ENCODE measurements at regions of chr11 and their contacts with region 1.

Region 1: GRCh38 chr11:2532704-2533586 is 88.1 kb downstream of the KCNQ1 start:
- DNase-seq: peak; percentile 93
- ATAC-seq: peak; percentile 89
- H3K4me3 ChIP-seq: peak overlapping the region in 2 of 5 experiments; percentile 9 to 19
- H3K4me3 Mint-ChIP-seq: peak overlapping the region; percentile 85
- H3K27ac ChIP-seq: no peak overlapping the region
- H3K27ac Mint-ChIP-seq: no peak overlapping the region
- H3K4me1 ChIP-seq: peaks cover 19 to 23% of the 10 kb centered on the region in 2 donors
- H3K4me1 Mint-ChIP-seq: peaks cover 22% of the 10 kb centered on the region
- H3K27me3 ChIP-seq: peaks cover 0 to 14% (median 0%) of the 10 kb centered on the region in 4 experiments
- H3K27me3 Mint-ChIP-seq: no peaks in the 10 kb centered on the region
- CTCF ChIP-seq: peak; percentile 99

Region 2: GRCh38 chr11:2298795-2299761 is 233.9 kb before region 1 on chr11:
- CTCF ChIA-PET with region 1: interaction called, 17 read pairs
- POLR2A ChIA-PET with region 1: no interaction called
- intact Hi-C with region 1: loop called (anchors 5 kb)
- DNase-seq: peak; percentile 52
- ATAC-seq: no peak
- H3K4me3 ChIP-seq: peak overlapping the region in 2 of 5 experiments; percentile 21 to 44
- H3K4me3 Mint-ChIP-seq: peak overlapping the region; percentile 50
- H3K27ac ChIP-seq: peak overlapping the region in 1 of 2 donors; percentile 37
- H3K27ac Mint-ChIP-seq: peak overlapping the region; percentile 88
- H3K4me1 ChIP-seq: peaks cover 51 to 57% of the 10 kb centered on the region in 2 donors
- H3K4me1 Mint-ChIP-seq: peaks cover 58% of the 10 kb centered on the region
- H3K27me3 ChIP-seq: no peaks in the 10 kb centered on the region
- H3K27me3 Mint-ChIP-seq: no peaks in the 10 kb centered on the region
- CTCF ChIP-seq: no peak

Region 3: GRCh38 chr11:2428322-2428795 is 104.6 kb before region 1 on chr11:
- CTCF ChIA-PET with region 1: interaction called, 217 read pairs
- POLR2A ChIA-PET with region 1: interaction called, 4 read pairs
- intact Hi-C with region 1: no loop called
- DNase-seq: peak; percentile 85
- ATAC-seq: peak; percentile 94
- H3K4me3 ChIP-seq: no peak overlapping the region
- H3K4me3 Mint-ChIP-seq: no peak overlapping the region
- H3K27ac ChIP-seq: no peak overlapping the region
- H3K27ac Mint-ChIP-seq: no peak overlapping the region
- H3K4me1 ChIP-seq: no peaks in the 10 kb centered on the region
- H3K4me1 Mint-ChIP-seq: no peaks in the 10 kb centered on the region
- H3K27me3 ChIP-seq: no peaks in the 10 kb centered on the region
- H3K27me3 Mint-ChIP-seq: no peaks in the 10 kb centered on the region
- CTCF ChIP-seq: peak; percentile 82

Region 4: GRCh38 chr11:2885676-2886081 is 352.7 kb after region 1 on chr11 and contains the start of gene CDKN1C:
- CTCF ChIA-PET with region 1: interaction called, 595 read pairs
- POLR2A ChIA-PET with region 1: interaction called, 16 read pairs
- intact Hi-C with region 1: no loop called
- DNase-seq: peak; percentile 90
- ATAC-seq: peak; percentile 91
- H3K4me3 ChIP-seq: peak within 1 kb of the TSS; percentile 39 to 93 (median 70)
- H3K4me3 Mint-ChIP-seq: peak within 1 kb of the TSS; percentile 95
- H3K27ac ChIP-seq: no peak within 1 kb of the TSS
- H3K27ac Mint-ChIP-seq: peak within 1 kb of the TSS; percentile 56
- H3K4me1 ChIP-seq: peaks cover 9 to 20% of the 10 kb centered on the region in 2 donors
- H3K4me1 Mint-ChIP-seq: peaks cover 16% of the 10 kb centered on the region
- H3K27me3 ChIP-seq: peaks cover 0 to 34% (median 7%) of the 10 kb centered on the region in 4 experiments
- H3K27me3 Mint-ChIP-seq: peaks cover 15% of the 10 kb centered on the region
- CTCF ChIP-seq: no peak
- total RNA-seq, gene CDKN1C: 5.9 and 8.0 TPM in 2 replicates

Region 5: DNA sequence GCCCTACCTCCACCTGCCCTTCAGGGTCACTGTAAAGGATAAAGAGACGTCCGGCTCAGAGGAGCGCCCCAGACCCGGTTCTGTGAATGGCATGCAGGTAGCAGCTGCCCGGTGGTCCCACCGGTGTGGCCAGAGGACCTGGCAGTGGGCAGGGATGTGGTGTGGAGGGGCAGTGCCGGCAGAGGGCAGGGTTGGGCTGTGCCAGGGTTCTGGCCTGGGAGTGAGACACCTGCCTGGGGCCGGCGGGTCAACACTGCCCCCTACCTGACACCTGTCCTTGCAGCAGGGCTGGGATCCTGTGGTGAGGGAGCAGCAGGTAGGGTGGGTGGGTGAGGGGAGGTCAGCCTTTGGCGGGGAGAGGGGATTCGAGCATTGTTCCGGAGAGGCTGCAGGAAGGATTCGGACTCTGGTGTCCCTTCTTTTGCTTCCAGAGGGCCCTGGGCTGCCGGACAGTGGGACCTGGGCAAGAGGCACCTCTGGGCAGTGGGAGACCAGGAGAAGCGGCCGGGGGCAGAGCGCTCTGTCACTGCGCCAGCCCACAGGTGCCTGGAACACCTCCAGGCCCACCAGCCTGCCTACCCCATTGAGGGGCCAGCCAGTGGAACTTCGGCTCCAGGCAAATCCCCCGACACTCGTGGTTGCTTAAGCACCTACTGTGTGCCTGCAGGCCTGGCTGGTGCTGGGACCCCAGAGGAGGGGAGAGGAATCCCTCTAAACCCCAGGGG is 397.9 kb after region 1 on chr11:
- CTCF ChIA-PET with region 1: interaction called, 28 read pairs
- POLR2A ChIA-PET with region 1: no interaction called
- intact Hi-C with region 1: loop called (anchors 1 kb)
- DNase-seq: peak; percentile 58
- ATAC-seq: peak; percentile 53
- H3K4me3 ChIP-seq: peak overlapping the region in 4 of 5 experiments; percentile 35 to 65 (median 52)
- H3K4me3 Mint-ChIP-seq: peak overlapping the region; percentile 88
- H3K27ac ChIP-seq: no peak overlapping the region
- H3K27ac Mint-ChIP-seq: no peak overlapping the region
- H3K4me1 ChIP-seq: peaks cover 28% of the 10 kb centered on the region in 2 donors
- H3K4me1 Mint-ChIP-seq: peaks cover 16% of the 10 kb centered on the region
- H3K27me3 ChIP-seq: peaks cover 0 to 61% (median 17%) of the 10 kb centered on the region in 4 experiments
- H3K27me3 Mint-ChIP-seq: peaks cover 28% of the 10 kb centered on the region
- CTCF ChIP-seq: peak; percentile 41

Region 6: GRCh38 chr11:3057069-3057963 is 524.4 kb after region 1 on chr11 and contains the start of gene CARS1:
- CTCF ChIA-PET with region 1: no interaction called
- POLR2A ChIA-PET with region 1: no interaction called
- intact Hi-C with region 1: no loop called
- DNase-seq: peak; percentile 94
- ATAC-seq: peak; percentile 96
- H3K4me3 ChIP-seq: peak within 1 kb of the TSS; percentile 22 to 97 (median 87)
- H3K4me3 Mint-ChIP-seq: peak within 1 kb of the TSS; percentile 93
- H3K27ac ChIP-seq: peak within 1 kb of the TSS; percentile 43 to 94
- H3K27ac Mint-ChIP-seq: peak within 1 kb of the TSS; percentile 83
- H3K4me1 ChIP-seq: peaks cover 15 to 20% of the 10 kb centered on the region in 2 donors
- H3K4me1 Mint-ChIP-seq: peaks cover 35% of the 10 kb centered on the region
- H3K27me3 ChIP-seq: no peaks in the 10 kb centered on the region
- H3K27me3 Mint-ChIP-seq: no peaks in the 10 kb centered on the region
- CTCF ChIP-seq: no peak
- total RNA-seq, gene CARS1: 49.5 and 56.7 TPM in 2 replicates

Region 7: DNA sequence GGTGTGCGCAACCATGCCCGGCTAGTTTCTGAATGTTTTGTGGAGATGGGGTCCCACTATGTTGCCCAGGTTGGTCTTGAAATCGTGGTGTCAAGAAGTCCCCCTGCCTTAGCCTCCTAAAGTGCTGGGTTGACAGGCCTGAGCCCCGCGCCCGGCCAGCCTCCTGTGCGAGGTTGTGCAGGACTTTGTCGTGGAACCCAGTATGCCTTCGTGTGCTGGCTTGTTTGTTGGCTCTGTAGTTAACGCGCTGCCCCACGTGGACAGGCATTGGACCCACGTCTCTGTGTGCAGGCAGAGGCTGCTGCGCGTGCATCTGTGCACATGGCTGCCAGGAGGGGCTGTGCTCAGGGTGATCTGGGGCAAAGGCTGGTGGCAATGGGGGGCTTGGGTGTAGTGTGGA is 879.9 kb after region 1 on chr11:
- CTCF ChIA-PET with region 1: interaction called, 11 read pairs
- POLR2A ChIA-PET with region 1: no interaction called
- intact Hi-C with region 1: no loop called
- DNase-seq: no peak
- ATAC-seq: no peak
- H3K4me3 ChIP-seq: no peak overlapping the region
- H3K4me3 Mint-ChIP-seq: no peak overlapping the region
- H3K27ac ChIP-seq: no peak overlapping the region
- H3K27ac Mint-ChIP-seq: no peak overlapping the region
- H3K4me1 ChIP-seq: no peaks in the 10 kb centered on the region
- H3K4me1 Mint-ChIP-seq: peaks cover 5% of the 10 kb centered on the region
- H3K27me3 ChIP-seq: no peaks in the 10 kb centered on the region
- H3K27me3 Mint-ChIP-seq: no peaks in the 10 kb centered on the region
- CTCF ChIP-seq: no peak

Measured in B cell (primary cell).